Posterior vena cava (tissue), 2 donors: ENCODE measurements at regions of chr3 and their contacts with region 1.

Region 1: GRCh38 chr3:152322756-152323155 is 54.0 kb downstream of the MBNL1 start:
- DNase-seq: no peak

Region 2: DNA sequence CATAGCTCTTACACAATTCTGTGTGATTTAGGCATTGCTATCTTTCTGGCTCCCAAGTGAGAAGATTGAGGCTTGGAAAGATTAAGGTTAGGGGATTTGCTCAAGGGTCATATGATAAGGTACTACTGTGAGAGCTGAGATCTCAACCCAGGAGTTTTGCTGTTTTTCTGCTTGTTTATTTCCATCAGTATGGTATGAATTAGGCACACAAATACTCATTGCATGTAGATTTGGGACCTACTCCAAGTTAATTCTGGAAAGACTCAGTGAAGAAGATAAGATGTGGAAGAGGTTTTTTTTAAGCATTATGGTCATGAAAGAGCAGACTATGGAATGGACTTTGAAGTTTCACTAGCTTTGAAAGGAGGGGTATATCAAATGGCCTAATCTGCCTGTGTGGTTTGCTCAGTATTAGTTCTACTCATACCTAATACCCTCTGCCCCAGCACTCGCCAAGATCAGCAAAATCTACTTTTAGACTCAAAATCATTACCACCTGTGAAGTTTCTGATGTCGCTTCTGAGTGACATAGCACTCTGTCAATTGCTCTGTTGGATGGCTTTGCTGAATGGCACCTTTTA is 41.5 kb before region 1 on chr3:
- intact Hi-C with region 1: no loop called
- DNase-seq: no peak

Region 3: DNA sequence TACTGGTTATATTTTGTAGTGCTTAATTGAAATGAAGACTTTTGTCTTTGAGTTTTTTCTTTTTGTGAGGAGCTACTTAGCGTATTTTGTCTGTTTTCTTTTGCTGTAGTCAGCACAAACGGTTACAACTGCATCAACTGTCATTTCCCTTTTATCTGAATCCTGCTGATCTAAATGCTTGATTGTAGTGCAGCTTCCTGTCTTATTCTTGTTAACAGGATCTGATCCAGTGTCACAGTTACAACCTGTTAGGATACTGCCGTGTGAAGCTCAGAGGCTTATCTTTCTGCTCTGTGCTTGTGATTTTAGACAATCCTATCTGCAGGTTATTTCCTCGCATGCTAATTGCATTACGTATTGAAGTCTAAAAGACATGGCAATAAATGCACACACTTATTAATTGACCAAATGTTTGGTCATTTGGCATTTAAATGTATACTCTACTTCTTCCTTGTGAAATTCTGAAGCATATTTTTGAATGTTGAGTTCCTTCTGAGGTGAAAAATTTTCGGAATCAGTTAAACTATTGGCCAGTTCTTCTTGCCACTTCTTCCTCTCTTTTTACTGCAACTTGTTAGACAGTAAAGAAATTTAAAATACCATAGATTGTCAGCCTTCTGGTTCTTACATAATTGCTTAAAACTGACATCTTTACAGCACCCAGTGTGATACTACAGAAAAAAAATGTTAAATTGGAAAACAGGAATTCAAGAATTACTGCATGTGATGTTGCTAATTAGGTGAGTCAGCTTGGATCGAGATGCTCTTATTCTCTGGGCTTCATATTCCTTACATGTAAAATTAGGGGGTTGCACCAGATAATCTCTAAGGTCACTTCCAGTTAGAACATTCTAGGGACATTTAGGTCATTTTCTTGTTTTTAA is 114.2 kb after region 1 on chr3:
- intact Hi-C with region 1: loop called in 1 of 2 experiments (anchors 10 kb)
- DNase-seq: no peak